Activated T-helper 2 cell treated with anti-CD3 and anti-CD28 coated beads, Interferon-gamma antibody, Interleukin-2, Interleukin-4, amounts not matched to agents 10 μg/mL and 5 μg/mL and 100 μg/mL, durations not matched to agents 14 hours and 24 hours and 36 hours (primary cell): ENCODE measurements at regions of chr6 and their contacts with region 1.

Region 1: DNA sequence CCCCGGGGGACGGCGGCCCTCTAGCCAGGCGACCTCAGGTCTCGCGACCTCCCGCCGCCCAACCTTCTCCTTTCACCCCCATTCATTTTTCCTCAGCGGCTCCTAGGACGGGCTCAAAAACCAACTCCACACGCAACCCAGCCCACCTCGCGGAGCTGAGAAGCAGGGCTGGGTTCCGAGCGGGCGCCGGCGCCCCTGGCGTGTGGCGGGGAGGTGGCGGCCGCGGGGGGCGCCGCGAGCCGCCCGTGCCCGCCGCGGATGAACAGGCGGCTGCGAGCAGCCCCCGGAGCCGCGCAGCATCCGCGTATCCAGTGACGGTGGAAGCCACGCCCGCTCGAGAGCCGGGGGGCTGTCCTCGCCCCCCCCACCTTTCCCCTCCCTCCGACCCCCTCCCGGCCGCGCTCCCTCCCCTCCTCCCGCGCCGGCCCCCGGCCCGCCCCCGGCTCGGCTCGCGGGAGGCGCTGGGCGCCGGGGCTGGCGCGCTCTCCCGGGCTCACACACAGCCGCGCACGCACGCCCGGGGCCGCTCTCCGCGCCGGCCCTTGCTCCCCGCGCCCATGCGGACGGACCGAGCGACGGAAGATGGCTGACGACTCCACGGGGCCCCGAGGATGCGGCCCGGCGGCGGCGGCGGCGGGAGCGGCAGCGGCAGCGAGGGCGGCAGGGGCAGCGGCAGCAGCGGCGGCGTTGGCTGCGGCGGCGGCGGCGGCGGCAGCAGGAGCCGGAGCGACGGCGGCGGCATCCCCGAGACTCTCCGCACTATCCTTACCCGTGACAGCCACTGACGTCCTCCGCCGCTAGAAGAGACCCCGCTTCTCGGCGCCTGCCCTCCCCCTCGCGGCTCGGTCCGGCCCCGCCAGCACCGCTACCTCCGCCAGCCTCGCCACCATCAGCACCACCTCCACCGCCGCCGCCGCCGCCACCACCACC is at the start of gene SOBP:
- DNase-seq: peak; percentile 20
- H3K4me3 Mint-ChIP-seq: peak within 1 kb of the TSS; percentile 88
- H3K27ac Mint-ChIP-seq: no peak within 1 kb of the TSS
- H3K4me1 Mint-ChIP-seq: peaks cover 20% of the 10 kb centered on the region
- H3K27me3 Mint-ChIP-seq: peaks cover 45% of the 10 kb centered on the region
- total RNA-seq, gene SOBP: 0.02 and 0.18 TPM in 2 replicates

Region 2: GRCh38 chr6:107114213-107114905 is 375.5 kb before region 1 on chr6:
- intact Hi-C with region 1: loop called (anchors 10 kb)
- DNase-seq: peak; percentile 69
- H3K4me3 Mint-ChIP-seq: peak overlapping the region; percentile 79
- H3K27ac Mint-ChIP-seq: peak overlapping the region; percentile 77
- H3K4me1 Mint-ChIP-seq: peaks cover 21% of the 10 kb centered on the region
- H3K27me3 Mint-ChIP-seq: peaks cover 5% of the 10 kb centered on the region

Region 3: DNA sequence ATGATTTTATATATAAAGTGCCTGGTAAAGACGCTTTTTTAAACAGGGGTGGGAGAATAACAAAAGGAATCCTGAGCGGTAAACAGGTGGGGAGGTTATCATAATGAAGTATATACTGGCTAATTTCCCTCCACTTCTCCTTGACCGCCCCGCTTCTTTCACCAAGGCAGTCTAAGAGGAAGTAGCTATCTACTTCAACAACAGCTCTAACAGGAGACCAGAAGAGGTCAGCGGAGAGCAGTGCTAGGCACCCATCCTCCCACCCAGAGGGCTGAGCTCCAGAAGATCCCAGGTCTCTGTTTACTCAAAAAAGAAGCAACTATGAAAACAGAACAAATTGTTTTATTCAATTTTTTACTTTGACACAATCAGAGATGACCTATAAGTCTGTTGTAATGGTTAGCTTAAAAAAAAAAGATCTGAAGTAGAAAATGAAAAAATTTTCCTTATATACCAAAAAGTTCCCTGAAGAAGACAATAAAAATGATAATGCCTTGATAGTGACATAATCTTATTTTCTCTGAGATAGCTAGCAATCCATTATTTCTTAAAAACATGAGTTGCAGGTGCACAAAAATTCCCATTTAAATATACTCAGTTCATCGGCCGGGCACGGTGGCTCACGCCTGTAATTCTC is 171.7 kb before region 1 on chr6:
- intact Hi-C with region 1: loop called (anchors 10 kb)
- DNase-seq: no peak
- H3K4me3 Mint-ChIP-seq: no peak overlapping the region
- H3K27ac Mint-ChIP-seq: no peak overlapping the region
- H3K4me1 Mint-ChIP-seq: peaks cover 10% of the 10 kb centered on the region
- H3K27me3 Mint-ChIP-seq: no peaks in the 10 kb centered on the region

Region 4: GRCh38 chr6:107459283-107460082 is 30.4 kb before region 1 on chr6 and contains the start of gene PDSS2:
- intact Hi-C with region 1: loop called (anchors 2 kb)
- DNase-seq: peak; percentile 96
- H3K4me3 Mint-ChIP-seq: peak within 1 kb of the TSS; percentile 95
- H3K27ac Mint-ChIP-seq: peak within 1 kb of the TSS; percentile 88
- H3K4me1 Mint-ChIP-seq: peaks cover 13% of the 10 kb centered on the region
- H3K27me3 Mint-ChIP-seq: peaks cover 2% of the 10 kb centered on the region
- total RNA-seq, gene PDSS2: 13.0 and 14.4 TPM in 2 replicates

Region 5: GRCh38 chr6:107634324-107635056 is 144.6 kb after region 1 on chr6:
- intact Hi-C with region 1: loop called (anchors 10 kb)
- DNase-seq: no peak
- H3K4me3 Mint-ChIP-seq: no peak overlapping the region
- H3K27ac Mint-ChIP-seq: no peak overlapping the region
- H3K4me1 Mint-ChIP-seq: peaks cover 3% of the 10 kb centered on the region
- H3K27me3 Mint-ChIP-seq: peaks cover 69% of the 10 kb centered on the region

Region 6: DNA sequence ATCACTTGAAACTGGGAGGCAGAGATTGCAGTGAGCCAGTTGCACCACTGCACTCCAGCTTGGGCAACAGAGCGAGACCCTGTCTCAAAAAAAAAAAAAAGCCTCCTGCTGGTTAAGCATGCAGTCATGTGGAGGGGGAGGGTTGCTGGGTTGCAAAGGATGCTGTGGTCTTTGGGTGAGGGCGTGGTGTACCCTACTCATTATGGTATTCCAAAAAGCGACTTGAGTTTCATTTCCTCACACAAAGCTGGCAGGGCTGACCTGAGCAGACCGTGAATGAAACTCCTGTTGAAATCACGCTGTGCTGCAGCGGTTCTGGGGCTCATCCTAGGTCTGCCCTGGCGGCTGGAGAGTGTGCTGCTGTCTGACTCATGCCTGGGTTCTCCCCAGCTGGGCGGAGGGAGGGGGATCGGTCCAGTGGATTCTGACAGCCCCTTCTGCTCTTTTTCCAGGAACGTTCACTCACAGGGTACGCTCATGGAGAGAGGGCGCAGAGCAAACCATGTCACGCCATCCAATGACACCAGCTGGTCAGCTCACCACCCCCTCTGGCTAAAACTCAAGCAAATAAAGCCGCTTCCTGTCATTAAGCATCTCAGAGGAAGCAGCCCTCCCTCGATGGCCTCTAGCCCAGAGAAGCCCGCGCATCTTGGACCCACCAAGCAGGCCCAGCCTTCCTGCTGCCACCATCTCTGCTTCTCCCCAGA is 168.0 kb after region 1 on chr6:
- intact Hi-C with region 1: loop called (anchors 10 kb)
- DNase-seq: peak; percentile 65
- H3K4me3 Mint-ChIP-seq: peak overlapping the region; percentile 45
- H3K27ac Mint-ChIP-seq: no peak overlapping the region
- H3K4me1 Mint-ChIP-seq: peaks cover 45% of the 10 kb centered on the region
- H3K27me3 Mint-ChIP-seq: peaks cover 16% of the 10 kb centered on the region

Region 7: DNA sequence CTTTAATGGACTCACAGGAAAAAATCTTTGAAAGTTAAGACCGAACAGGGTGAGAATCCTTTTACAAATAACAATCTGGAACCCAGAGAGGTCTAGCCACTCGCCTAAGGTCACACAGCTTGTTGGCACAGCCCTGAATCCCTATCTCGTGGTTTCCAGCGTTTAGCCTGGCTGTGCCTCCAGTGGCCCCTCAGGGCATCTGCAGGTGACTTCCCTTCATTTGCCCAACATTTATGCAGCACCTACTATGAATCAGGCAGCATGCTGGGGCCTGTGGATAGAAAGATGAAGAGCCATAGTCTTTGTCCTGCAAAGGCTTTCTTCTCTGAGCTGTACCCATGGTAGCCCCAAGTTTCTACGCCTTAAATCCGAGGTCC is 673.4 kb after region 1 on chr6:
- intact Hi-C with region 1: loop called (anchors 5 kb)
- DNase-seq: no peak
- H3K4me3 Mint-ChIP-seq: no peak overlapping the region
- H3K27ac Mint-ChIP-seq: no peak overlapping the region
- H3K4me1 Mint-ChIP-seq: peaks cover 4% of the 10 kb centered on the region
- H3K27me3 Mint-ChIP-seq: peaks cover 93% of the 10 kb centered on the region